ENCODE measurements at regions of chr17 and their contacts with region 1.

Region 1: DNA sequence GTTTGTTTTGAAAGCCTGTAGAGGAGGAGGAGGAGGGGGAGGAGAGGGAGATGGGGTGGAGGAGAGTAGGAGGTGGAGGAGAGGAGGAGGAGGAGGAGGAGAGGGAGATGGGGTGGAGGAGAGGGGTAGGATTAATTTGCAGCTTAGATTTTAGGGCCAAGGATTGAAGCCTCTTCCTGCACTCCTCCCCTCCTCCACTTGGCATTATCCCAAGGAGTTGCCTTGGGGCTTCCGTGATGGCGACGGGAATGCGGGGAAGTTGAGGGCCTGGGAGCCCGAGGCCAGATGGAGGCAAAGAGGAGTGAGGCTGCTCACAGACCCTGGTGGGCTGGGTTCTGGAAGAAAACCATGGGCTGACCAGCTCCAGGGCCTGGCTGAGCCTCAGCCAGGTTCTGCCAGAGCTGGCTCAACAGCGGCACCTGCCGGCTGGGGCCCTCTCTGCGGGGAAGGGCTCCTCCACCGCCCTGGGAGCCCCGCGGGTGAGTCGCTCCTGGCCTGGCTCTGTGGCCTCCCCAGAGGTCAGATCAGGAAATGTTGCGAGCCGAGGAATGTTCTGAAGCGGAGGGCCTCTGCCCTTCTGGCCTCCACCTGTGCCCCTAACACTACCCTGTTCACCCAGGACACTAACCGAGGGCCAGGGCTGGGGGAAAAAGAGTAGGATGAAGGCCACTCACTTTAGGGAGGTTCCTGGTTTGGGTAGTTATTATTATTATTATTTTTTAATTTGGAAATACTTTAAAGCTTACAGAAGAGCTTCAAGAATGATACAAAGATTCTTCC is 23.9 kb upstream of the FMNL1 start:
- DNase-seq: peak; percentile 86
- H3K4me3 Mint-ChIP-seq: no peak overlapping the region
- H3K27ac Mint-ChIP-seq: no peak overlapping the region
- H3K4me1 Mint-ChIP-seq: peaks cover 7% of the 10 kb centered on the region
- H3K27me3 Mint-ChIP-seq: no peaks in the 10 kb centered on the region

Region 2: DNA sequence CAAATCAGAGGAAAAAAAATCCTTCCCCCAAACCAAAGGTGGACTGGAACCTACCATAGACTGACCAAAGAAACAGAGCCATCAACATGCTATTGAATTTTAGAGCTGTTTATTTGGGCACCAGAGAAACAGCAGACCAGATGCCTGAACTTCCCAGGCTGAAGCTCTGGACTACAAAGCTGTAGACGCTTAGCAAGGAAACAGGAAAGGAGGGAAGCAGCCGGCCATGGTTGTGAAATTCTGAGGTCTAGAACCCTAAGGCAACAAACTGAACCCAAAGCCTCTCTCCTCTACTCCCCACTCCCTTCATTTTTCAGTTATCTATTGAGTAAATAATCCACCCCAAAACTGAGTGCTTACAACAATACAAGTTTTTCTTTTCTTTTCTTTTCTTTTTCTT is 586.9 kb before region 1 on chr17:
- CTCF ChIA-PET with region 1: no interaction called
- POLR2A ChIA-PET with region 1: no interaction called
- DNase-seq: no peak
- H3K4me3 Mint-ChIP-seq: no peak overlapping the region
- H3K27ac Mint-ChIP-seq: no peak overlapping the region
- H3K4me1 Mint-ChIP-seq: no peaks in the 10 kb centered on the region
- H3K27me3 Mint-ChIP-seq: peaks cover 4% of the 10 kb centered on the region

Region 3: DNA sequence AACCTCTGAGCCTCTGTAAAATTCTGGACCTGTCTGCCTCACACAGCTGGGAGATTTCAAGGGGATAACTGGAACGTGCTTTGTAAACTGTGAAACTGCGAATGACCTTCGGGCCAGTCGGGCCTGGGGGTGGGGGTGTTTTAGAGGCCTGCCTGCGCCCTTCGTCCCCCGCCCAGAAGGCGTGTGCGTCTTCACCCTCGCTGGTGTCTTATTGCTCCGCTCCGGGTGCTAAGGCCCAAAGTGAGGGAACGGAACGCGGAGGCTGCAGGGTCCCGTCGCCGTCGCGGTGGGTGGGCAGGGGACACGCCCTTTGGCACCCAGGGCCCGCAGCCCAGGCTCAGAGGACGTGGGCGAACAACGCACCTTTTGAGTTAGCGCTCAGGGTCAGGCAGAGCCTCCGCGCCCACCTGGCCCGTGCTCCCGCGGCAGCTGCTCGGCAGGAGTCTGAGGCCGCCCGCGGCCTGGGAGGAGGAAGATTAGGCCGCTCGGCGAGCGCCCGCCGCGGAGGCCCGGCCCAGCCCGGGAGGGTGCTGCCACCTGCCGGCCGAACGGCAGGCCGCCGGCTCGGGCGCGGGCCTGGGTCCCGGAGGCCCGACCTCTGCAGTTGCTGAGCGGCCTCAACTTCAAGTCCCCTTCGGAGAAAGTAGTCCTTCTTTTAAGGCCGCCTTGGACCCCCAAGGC is 176.0 kb before region 1 on chr17:
- CTCF ChIA-PET with region 1: no interaction called
- POLR2A ChIA-PET with region 1: no interaction called
- DNase-seq: peak; percentile 68
- H3K4me3 Mint-ChIP-seq: peak overlapping the region; percentile 0
- H3K27ac Mint-ChIP-seq: no peak overlapping the region
- H3K4me1 Mint-ChIP-seq: peaks cover 17% of the 10 kb centered on the region
- H3K27me3 Mint-ChIP-seq: peaks cover 34% of the 10 kb centered on the region

Region 4: DNA sequence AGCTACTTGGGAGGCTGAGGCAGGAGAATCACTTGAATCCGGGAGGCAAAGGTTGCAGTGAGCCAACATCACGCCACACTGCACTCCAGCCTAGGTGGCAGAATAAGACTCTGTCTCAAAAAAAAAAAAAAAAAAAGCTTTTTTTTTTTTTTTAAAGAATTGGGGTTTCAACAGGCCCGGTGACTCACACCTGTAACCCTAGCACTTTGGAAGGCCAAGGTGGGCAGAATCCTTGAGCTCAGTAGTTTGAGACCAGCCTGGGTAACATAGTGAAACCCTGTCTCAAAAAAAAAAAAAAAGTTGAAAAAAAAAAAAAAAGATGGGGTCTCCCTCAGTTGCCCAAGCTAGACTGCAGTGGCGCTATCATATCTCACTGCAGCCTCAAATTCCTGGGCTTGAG is 42.7 kb before region 1 on chr17:
- CTCF ChIA-PET with region 1: interaction called, 90 read pairs
- POLR2A ChIA-PET with region 1: interaction called, 22 read pairs
- DNase-seq: no peak
- H3K4me3 Mint-ChIP-seq: no peak overlapping the region
- H3K27ac Mint-ChIP-seq: no peak overlapping the region
- H3K4me1 Mint-ChIP-seq: peaks cover 44% of the 10 kb centered on the region
- H3K27me3 Mint-ChIP-seq: no peaks in the 10 kb centered on the region

Region 5: DNA sequence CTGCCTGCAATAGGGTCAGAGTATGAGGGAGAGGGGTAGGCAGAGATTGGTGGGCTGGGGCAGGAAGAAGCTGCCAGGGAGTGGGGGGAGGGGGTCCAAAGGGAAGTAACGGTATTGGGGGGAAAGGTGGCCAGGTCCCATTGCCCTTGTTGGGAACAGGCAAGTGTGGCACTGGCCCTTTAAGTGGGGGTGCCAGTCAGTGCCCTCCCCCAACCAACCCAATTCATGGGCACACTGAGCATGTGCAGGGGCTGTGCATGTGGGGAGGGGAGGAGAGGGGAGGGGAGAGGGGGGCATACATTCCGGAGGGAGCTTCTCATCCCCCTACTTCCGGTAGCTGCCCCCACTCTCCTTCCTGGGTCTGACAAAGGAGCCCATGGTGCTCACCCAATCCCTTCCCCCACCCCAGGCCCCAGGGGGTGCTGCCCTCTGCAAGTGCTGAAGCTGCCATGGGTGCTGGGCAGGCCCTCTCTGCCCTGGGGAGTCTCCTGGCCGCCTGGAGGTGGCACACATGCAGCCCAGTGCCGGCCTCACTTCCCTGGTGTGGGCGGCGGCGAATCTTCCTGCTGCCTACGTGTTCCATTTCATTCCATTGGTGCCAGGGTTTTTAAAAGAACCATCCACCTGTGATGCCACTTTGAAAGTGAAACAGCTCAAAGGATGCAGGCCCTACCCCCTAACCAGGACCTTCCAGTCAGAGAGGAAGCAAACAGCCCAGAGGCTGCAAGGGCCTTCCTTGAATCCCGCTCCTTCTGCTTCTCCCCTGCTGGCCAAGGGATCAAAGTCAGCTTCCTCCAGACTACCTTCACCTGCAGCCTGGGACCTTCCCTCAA is 25.1 kb before region 1 on chr17:
- CTCF ChIA-PET with region 1: interaction called, 17 read pairs
- POLR2A ChIA-PET with region 1: interaction called, 3 read pairs
- DNase-seq: peak; percentile 40
- H3K4me3 Mint-ChIP-seq: peak overlapping the region; percentile 51
- H3K27ac Mint-ChIP-seq: peak overlapping the region; percentile 81
- H3K4me1 Mint-ChIP-seq: peaks cover 25% of the 10 kb centered on the region
- H3K27me3 Mint-ChIP-seq: no peaks in the 10 kb centered on the region